ENCODE measurements at regions of chr6 and their contacts with region 1.

Region 1: GRCh38 chr6:37686111-37686510 is 11.6 kb downstream of the MDGA1 start:
- DNase-seq: no peak
- ATAC-seq: no peak
- H3K4me3 ChIP-seq: no peak overlapping the region
- H3K27ac ChIP-seq: no peak overlapping the region
- H3K4me1 ChIP-seq: peaks cover 2% of the 10 kb centered on the region
- H3K27me3 ChIP-seq: no peaks in the 10 kb centered on the region
- CTCF ChIP-seq: no peak

Region 2: DNA sequence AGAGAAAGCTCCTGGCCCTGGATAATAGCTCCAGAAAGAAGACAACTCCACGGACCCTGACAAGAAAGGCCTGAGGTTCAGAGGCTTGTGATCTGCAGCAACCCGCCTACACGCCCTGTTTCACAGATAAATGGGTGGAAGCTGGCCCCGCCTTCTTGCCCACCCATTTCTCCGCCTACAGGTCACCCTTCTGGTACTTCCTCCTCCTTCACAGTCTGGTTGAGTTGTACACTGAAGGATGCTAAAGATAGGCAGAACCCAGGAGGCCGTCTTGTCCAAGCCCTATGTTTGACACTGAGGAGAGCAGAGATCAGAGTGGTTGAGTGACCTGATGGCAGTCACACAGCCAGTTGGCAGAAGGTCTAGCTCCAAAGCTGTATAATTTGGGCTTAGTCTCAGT is 45.8 kb after region 1 on chr6:
- CTCF ChIA-PET with region 1: no interaction called
- POLR2A ChIA-PET with region 1: interaction called, 11 read pairs
- in situ Hi-C with region 1: no loop called
- intact Hi-C with region 1: no loop called
- DNase-seq: no peak
- ATAC-seq: peak; percentile 31; the same call in 1 of the 2 replicates
- H3K4me3 ChIP-seq: no peak overlapping the region
- H3K27ac ChIP-seq: no peak overlapping the region
- H3K4me1 ChIP-seq: no peaks in the 10 kb centered on the region
- H3K27me3 ChIP-seq: no peaks in the 10 kb centered on the region
- CTCF ChIP-seq: no peak

Region 3: GRCh38 chr6:38404900-38405556 is 718.9 kb after region 1 on chr6:
- CTCF ChIA-PET with region 1: no interaction called
- POLR2A ChIA-PET with region 1: no interaction called
- in situ Hi-C with region 1: no loop called
- intact Hi-C with region 1: no loop called
- DNase-seq: no peak
- ATAC-seq: no peak
- H3K4me3 ChIP-seq: no peak overlapping the region
- H3K27ac ChIP-seq: no peak overlapping the region
- H3K4me1 ChIP-seq: no peaks in the 10 kb centered on the region; the same call in 1 of the 2 replicates
- H3K27me3 ChIP-seq: no peaks in the 10 kb centered on the region
- CTCF ChIP-seq: no peak